CD8-positive, alpha-beta T cell (primary cell): ENCODE measurements at regions of chrX and their contacts with region 1.

Region 1: GRCh38 chrX:49637686-49638085 is 38.9 kb downstream of the GAGE1 start:
- DNase-seq: peak in 2 of 9 experiments; percentile 2 to 7
- ATAC-seq: no peak
- H3K4me3 ChIP-seq: no peak overlapping the region
- H3K4me3 Mint-ChIP-seq: no peak overlapping the region
- H3K27ac ChIP-seq: no peak overlapping the region
- H3K27ac Mint-ChIP-seq: no peak overlapping the region
- H3K4me1 ChIP-seq: no peaks in the 10 kb centered on the region
- H3K4me1 Mint-ChIP-seq: no peaks in the 10 kb centered on the region
- H3K27me3 ChIP-seq: no peaks in the 10 kb centered on the region
- H3K27me3 Mint-ChIP-seq: no peaks in the 10 kb centered on the region
- CTCF ChIP-seq: no peak

Region 2: GRCh38 chrX:49291615-49292337 is 345.9 kb before region 1 on chrX:
- CTCF ChIA-PET with region 1: interaction called, 5 read pairs
- POLR2A ChIA-PET with region 1: no interaction called
- intact Hi-C with region 1: loop called in 1 of 2 experiments (anchors 5 kb)
- DNase-seq: peak; percentile 27 to 75 (median 68)
- ATAC-seq: peak; percentile 87
- H3K4me3 ChIP-seq: no peak overlapping the region
- H3K4me3 Mint-ChIP-seq: no peak overlapping the region
- H3K27ac ChIP-seq: no peak overlapping the region
- H3K27ac Mint-ChIP-seq: no peak overlapping the region
- H3K4me1 ChIP-seq: peaks cover 34% of the 10 kb centered on the region
- H3K4me1 Mint-ChIP-seq: peaks cover 27% of the 10 kb centered on the region
- H3K27me3 ChIP-seq: no peaks in the 10 kb centered on the region
- H3K27me3 Mint-ChIP-seq: no peaks in the 10 kb centered on the region
- CTCF ChIP-seq: peak; percentile 37